Pancreas (tissue), 10 donors: ENCODE measurements at regions of chr4 and their contacts with region 1.

Region 1: DNA sequence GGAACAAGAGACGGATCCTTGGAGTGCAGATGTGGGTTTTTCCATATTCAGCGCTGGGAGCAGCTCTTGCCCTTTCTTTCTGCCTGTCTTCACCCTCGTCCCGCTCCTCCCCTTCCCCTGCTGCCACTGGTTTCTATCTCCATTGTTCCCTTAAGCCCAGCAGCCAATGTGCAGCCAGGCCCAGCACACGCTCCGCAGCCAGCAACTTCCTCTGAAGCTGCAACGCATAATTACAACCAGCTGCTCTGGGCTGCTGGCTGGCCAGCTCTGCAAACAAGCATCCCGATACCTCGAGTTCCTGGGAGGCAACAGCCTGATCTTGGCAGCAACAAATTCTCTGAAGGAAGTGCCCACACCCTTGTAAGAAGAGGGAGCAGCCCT is 83.6 kb upstream of the MAML3 start:
- DNase-seq: peak in 1 of 6 donors; percentile 40
- ATAC-seq: peak; percentile 41 to 86 (median 78)
- H3K4me3 ChIP-seq: no peak overlapping the region
- H3K27ac ChIP-seq: peak overlapping the region in 3 of 4 donors; percentile 54 to 77 (median 63)
- H3K4me1 ChIP-seq: peaks cover 0 to 3% (median 0%) of the 10 kb centered on the region in 3 donors
- H3K27me3 ChIP-seq: no peaks in the 10 kb centered on the region
- CTCF ChIP-seq: no peak

Region 2: GRCh38 chr4:140163029-140163810 is 74.4 kb before region 1 on chr4:
- intact Hi-C with region 1: loop called in 2 of 3 experiments (anchors 5 to 10 kb)
- DNase-seq: no peak
- ATAC-seq: no peak
- H3K4me3 ChIP-seq: no peak overlapping the region
- H3K27ac ChIP-seq: no peak overlapping the region
- H3K4me1 ChIP-seq: peaks cover 6 to 11% (median 7%) of the 10 kb centered on the region in 3 donors
- H3K27me3 ChIP-seq: no peaks in the 10 kb centered on the region
- CTCF ChIP-seq: no peak